Mammary epithelial cell (primary cell): ENCODE measurements at regions of chr12 and their contacts with region 1.

Region 1: GRCh38 chr12:109255377-109255776 is 53.7 kb downstream of the FOXN4 start:
- DNase-seq: no peak
- H3K4me3 ChIP-seq: no peak overlapping the region
- H3K27ac ChIP-seq: no peak overlapping the region
- H3K4me1 ChIP-seq: no peaks in the 10 kb centered on the region
- H3K27me3 ChIP-seq: no peaks in the 10 kb centered on the region
- CTCF ChIP-seq: peak in 1 of 2 donors; percentile 23

Region 2: GRCh38 chr12:109134186-109134917 is 121.0 kb before region 1 on chr12:
- CTCF ChIA-PET with region 1: no interaction called
- dilution Hi-C with region 1: no loop called
- in situ Hi-C with region 1: no loop called
- intact Hi-C with region 1: loop called (anchors 1 kb)
- DNase-seq: peak; percentile 3
- H3K4me3 ChIP-seq: no peak overlapping the region
- H3K27ac ChIP-seq: no peak overlapping the region
- H3K4me1 ChIP-seq: no peaks in the 10 kb centered on the region
- H3K27me3 ChIP-seq: no peaks in the 10 kb centered on the region
- CTCF ChIP-seq: peak; percentile 47 to 66

Region 3: GRCh38 chr12:109346920-109347319 is 91.5 kb after region 1 on chr12:
- CTCF ChIA-PET with region 1: no interaction called
- dilution Hi-C with region 1: no loop called
- in situ Hi-C with region 1: no loop called
- intact Hi-C with region 1: no loop called
- DNase-seq: no peak
- H3K4me3 ChIP-seq: no peak overlapping the region
- H3K27ac ChIP-seq: no peak overlapping the region
- H3K4me1 ChIP-seq: no peaks in the 10 kb centered on the region
- H3K27me3 ChIP-seq: no peaks in the 10 kb centered on the region
- CTCF ChIP-seq: peak in 1 of 2 donors; percentile 11